Activated T-helper 1 cell treated with anti-CD3 and anti-CD28 coated beads, Interleukin-12 subunit alpha, Interleukin-12 subunit beta, Interleukin-2, Interleukin-4 antibody, amounts not matched to agents 30 ng/mL and 10 ng/mL and 1 ng/mL, durations not matched to agents 14 hours and 24 hours and 36 hours (primary cell): ENCODE measurements at regions of chr5 and their contacts with region 1.

Region 1: GRCh38 chr5:74648835-74649293 is 8.3 kb upstream of the ENC1 start:
- DNase-seq: peak; percentile 26
- H3K4me3 Mint-ChIP-seq: no peak overlapping the region
- H3K27ac Mint-ChIP-seq: no peak overlapping the region
- H3K4me1 Mint-ChIP-seq: peaks cover 10% of the 10 kb centered on the region
- H3K27me3 Mint-ChIP-seq: peaks cover 41% of the 10 kb centered on the region

Region 2: GRCh38 chr5:73591102-73591695 is 1057.7 kb before region 1 on chr5:
- intact Hi-C with region 1: loop called (anchors 1 kb)
- DNase-seq: peak; percentile 38
- H3K4me3 Mint-ChIP-seq: no peak overlapping the region
- H3K27ac Mint-ChIP-seq: no peak overlapping the region
- H3K4me1 Mint-ChIP-seq: no peaks in the 10 kb centered on the region
- H3K27me3 Mint-ChIP-seq: peaks cover 9% of the 10 kb centered on the region

Region 3: GRCh38 chr5:73792687-73793320 is 856.1 kb before region 1 on chr5:
- intact Hi-C with region 1: loop called (anchors 2 kb)
- DNase-seq: peak; percentile 43
- H3K4me3 Mint-ChIP-seq: no peak overlapping the region
- H3K27ac Mint-ChIP-seq: no peak overlapping the region
- H3K4me1 Mint-ChIP-seq: peaks cover 11% of the 10 kb centered on the region
- H3K27me3 Mint-ChIP-seq: peaks cover 4% of the 10 kb centered on the region

Region 4: DNA sequence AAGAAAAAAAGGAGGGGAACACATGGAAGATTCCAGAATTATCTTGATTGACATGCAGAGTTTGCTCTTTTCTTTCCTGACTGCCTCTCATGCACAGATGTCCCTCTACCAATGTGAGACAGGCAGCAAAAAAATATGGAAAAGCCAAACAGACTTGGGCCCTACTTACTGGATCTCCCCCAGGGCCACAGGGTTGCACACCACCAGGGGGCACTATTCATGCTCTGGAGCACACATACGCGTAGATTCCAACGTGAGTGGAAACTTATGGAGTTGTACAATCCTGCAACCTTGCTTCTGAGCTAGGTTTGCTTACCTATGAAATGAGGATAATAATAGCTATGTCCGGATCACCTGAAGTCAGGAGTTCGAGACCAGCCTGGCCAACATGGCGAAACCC is 703.4 kb before region 1 on chr5:
- intact Hi-C with region 1: loop called (anchors 1 kb)
- DNase-seq: no peak
- H3K4me3 Mint-ChIP-seq: no peak overlapping the region
- H3K27ac Mint-ChIP-seq: no peak overlapping the region
- H3K4me1 Mint-ChIP-seq: no peaks in the 10 kb centered on the region
- H3K27me3 Mint-ChIP-seq: peaks cover 2% of the 10 kb centered on the region

Region 5: GRCh38 chr5:74316064-74316679 is 332.7 kb before region 1 on chr5:
- intact Hi-C with region 1: loop called (anchors 5 kb)
- DNase-seq: no peak
- H3K4me3 Mint-ChIP-seq: no peak overlapping the region
- H3K27ac Mint-ChIP-seq: no peak overlapping the region
- H3K4me1 Mint-ChIP-seq: no peaks in the 10 kb centered on the region
- H3K27me3 Mint-ChIP-seq: peaks cover 15% of the 10 kb centered on the region

Region 6: GRCh38 chr5:74673011-74673790 is 24.3 kb after region 1 on chr5:
- intact Hi-C with region 1: no loop called
- DNase-seq: no peak
- H3K4me3 Mint-ChIP-seq: no peak overlapping the region
- H3K27ac Mint-ChIP-seq: no peak overlapping the region
- H3K4me1 Mint-ChIP-seq: no peaks in the 10 kb centered on the region
- H3K27me3 Mint-ChIP-seq: peaks cover 7% of the 10 kb centered on the region